Panc1 (cell line): ENCODE measurements at regions of chr4 and their contacts with region 1.

Region 1: DNA sequence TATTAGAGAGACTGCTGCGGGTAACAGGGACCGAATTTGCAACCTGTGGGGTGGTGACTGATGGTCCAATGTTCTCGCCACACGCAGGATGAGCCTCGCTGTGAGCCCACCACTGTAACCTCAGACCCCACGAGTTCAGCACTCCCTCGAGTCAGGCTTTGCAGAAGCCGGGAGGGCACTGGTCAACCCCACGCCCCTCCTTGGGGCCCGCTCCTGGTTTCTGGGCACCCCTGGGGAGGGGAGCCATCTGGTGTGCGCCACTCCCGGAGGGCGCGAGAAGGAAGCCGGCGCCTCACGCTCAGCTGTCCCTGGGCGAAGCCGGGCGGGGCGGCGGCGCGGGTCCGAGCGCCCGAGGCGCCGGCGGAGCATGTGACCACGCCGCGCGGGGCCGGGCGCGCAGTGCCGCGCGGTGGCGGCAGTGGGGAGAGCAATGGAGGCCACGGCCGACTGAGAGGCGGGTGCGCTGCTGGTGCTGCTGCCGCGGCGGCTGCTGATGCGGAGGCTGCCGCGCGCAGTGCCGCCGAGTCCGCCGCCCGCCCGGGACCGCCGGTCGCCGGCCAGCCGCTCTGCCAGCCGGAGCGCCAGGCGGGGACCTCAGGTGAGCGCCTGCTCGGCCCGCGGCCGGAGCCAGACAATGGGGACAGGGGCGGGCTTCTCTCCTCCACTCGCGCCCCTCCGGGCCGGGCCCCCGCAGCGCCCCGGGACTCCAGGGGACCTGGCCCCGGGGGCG is 100.1 kb downstream of the CEP135 start:
- DNase-seq: no peak
- ATAC-seq: peak; percentile 92
- H3K4me3 ChIP-seq: peak overlapping the region; percentile 59 to 63
- H3K27ac ChIP-seq: no peak overlapping the region
- H3K4me1 ChIP-seq: no peaks in the 10 kb centered on the region; the same call in 1 of the 2 replicates
- H3K27me3 ChIP-seq: no peaks in the 10 kb centered on the region; the same call in none of the 2 replicates
- CTCF ChIP-seq: peak; percentile 71

Region 2: GRCh38 chr4:56149591-56149990 is 100.7 kb after region 1 on chr4:
- CTCF ChIA-PET with region 1: no interaction called
- POLR2A ChIA-PET with region 1: no interaction called
- in situ Hi-C with region 1: no loop called
- intact Hi-C with region 1: no loop called
- DNase-seq: no peak
- ATAC-seq: no peak
- H3K4me3 ChIP-seq: no peak overlapping the region
- H3K27ac ChIP-seq: no peak overlapping the region
- H3K4me1 ChIP-seq: no peaks in the 10 kb centered on the region
- H3K27me3 ChIP-seq: no peaks in the 10 kb centered on the region
- CTCF ChIP-seq: no peak

Region 3: DNA sequence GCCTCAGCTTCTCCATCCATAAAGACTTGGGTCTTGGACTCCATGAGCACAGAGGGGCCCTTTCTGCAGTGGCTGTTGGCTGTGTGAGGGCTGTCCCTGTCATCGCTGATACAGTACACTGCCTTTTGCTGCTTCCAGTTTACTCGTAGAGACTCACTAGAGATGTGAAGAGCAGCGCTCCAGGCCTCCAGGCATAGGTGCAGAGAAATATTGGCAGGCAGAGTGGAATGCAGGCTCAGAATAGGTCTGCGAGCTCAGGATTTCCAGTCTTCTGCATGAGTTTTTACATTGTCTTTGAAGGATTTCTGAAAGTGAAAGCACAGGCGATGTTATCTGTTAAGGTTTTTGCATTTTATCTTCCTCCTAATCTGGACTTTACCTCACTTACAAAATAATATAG is 241.1 kb after region 1 on chr4:
- CTCF ChIA-PET with region 1: no interaction called
- POLR2A ChIA-PET with region 1: no interaction called
- in situ Hi-C with region 1: no loop called
- intact Hi-C with region 1: loop called (anchors 10 kb)
- DNase-seq: no peak
- ATAC-seq: peak; percentile 58; the same call in 1 of the 2 replicates
- H3K4me3 ChIP-seq: peak overlapping the region; percentile 7 to 34; a peak in 3 of 4 replicates
- H3K27ac ChIP-seq: no peak overlapping the region
- H3K4me1 ChIP-seq: no peaks in the 10 kb centered on the region
- H3K27me3 ChIP-seq: no peaks in the 10 kb centered on the region
- CTCF ChIP-seq: no peak